HepG2 (cell line): ENCODE measurements at regions of chr18 and their contacts with region 1.

Region 1: DNA sequence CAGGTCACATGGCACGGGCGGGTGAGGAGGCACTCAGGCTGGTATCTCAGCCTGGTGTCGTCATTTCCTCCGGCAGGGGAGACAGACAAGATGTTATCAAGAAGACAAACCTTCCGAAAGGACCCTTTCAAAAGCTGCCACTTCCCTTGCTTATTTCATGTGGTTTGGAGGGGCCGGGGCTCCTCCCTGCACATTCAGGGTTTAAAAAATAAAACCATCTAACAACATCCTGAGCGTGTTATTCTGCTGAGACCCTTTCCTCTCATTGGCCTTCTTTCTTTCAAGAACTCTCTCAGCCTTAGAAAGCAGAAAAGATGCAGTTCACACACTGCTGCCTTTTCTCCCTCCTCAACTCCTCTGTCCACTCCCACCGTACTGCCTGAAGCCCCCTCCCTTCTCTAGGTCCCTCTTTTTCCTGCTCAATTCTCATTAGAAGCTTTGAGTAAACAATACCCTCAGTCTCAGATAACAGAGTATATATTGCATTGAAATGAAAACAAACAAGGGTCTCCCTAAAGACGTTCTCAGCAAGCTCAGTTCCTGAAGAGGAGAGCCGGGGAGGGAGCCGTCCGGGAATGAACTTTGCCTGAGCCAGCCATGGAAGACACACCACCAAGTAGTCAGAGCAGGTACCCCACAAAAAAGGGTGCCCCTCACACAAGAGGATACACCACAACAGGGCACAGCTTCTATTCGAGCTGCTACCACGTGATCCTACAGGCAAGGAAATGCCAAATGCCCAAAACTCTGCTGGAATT is 9.7 kb downstream of the SMAD7 start:
- DNase-seq: no peak
- ATAC-seq: no peak
- H3K4me3 ChIP-seq: peak overlapping the region in 1 of 3 experiments; percentile 53; a peak in 1 of 6 replicates
- H3K27ac ChIP-seq: peak overlapping the region; percentile 12
- H3K4me1 ChIP-seq: peaks cover 99% of the 10 kb centered on the region
- H3K27me3 ChIP-seq: no peaks in the 10 kb centered on the region
- CTCF ChIP-seq: no peak
- EP300 ChIP-seq: no peak
- POLR2A ChIP-seq: no peak
- RAD21 ChIP-seq: no peak

Region 2: GRCh38 chr18:48983771-48984355 is 42.8 kb after region 1 on chr18:
- CTCF ChIA-PET with region 1: no interaction called
- POLR2A ChIA-PET with region 1: no interaction called
- in situ Hi-C with region 1: no loop called
- intact Hi-C with region 1: loop called (anchors 5 kb)
- DNase-seq: peak; percentile 63
- ATAC-seq: no peak
- H3K4me3 ChIP-seq: no peak overlapping the region
- H3K27ac ChIP-seq: no peak overlapping the region
- H3K4me1 ChIP-seq: peaks cover 73% of the 10 kb centered on the region
- H3K27me3 ChIP-seq: no peaks in the 10 kb centered on the region
- CTCF ChIP-seq: no peak
- EP300 ChIP-seq: no peak
- POLR2A ChIP-seq: no peak
- RAD21 ChIP-seq: no peak